ENCODE measurements at regions of chr12 and their contacts with region 1.

Region 1: GRCh38 chr12:48795480-48796455 is 6.9 kb upstream of the ADCY6 start:
- DNase-seq: peak; percentile 71 to 85 (median 75)
- H3K4me3 ChIP-seq: no peak overlapping the region
- H3K27ac ChIP-seq: no peak overlapping the region
- H3K4me1 ChIP-seq: no peaks in the 10 kb centered on the region
- H3K27me3 ChIP-seq: no peaks in the 10 kb centered on the region
- CTCF ChIP-seq: peak; percentile 81 to 96 (median 92)
- EP300 ChIP-seq: no peak
- POLR2A ChIP-seq: no peak

Region 2: DNA sequence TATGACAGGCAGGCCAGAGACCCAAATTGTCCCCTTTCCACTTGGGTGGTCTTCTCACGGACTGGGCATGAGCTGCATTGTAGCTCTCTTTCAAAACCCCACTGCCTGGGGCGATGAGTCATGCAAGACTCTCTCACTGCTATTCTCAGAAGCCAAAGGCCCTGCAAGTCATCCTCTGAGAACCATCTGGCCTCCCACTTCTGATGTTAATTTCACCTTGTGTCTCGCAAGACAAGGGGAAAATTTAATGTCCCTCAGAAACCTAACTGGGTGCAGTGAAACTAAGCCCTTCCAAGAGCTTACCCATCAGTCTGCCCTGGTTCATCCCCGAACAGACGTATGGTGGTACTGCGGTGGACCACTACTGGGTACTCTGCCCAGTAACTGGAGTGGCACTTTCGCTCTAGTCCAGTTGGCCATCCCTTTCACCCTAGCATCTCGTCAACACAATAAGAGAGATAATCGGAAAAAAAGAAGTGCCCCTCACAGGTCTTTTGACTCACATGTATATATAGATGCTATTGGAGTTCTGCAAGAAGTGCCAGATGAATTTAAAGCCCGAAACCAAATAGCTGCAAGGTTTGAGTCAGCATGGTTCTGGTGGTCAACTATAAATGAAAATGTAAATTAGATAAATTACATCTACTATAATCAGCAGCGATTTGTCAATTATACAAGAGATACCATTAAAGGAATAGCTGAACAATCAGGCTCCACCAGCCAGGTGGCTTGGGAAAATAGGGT is 194.6 kb before region 1 on chr12:
- intact Hi-C with region 1: no loop called
- DNase-seq: no peak
- H3K4me3 ChIP-seq: no peak overlapping the region
- H3K27ac ChIP-seq: no peak overlapping the region
- H3K4me1 ChIP-seq: no peaks in the 10 kb centered on the region
- H3K27me3 ChIP-seq: no peaks in the 10 kb centered on the region
- CTCF ChIP-seq: no peak
- EP300 ChIP-seq: no peak
- POLR2A ChIP-seq: no peak

Region 3: DNA sequence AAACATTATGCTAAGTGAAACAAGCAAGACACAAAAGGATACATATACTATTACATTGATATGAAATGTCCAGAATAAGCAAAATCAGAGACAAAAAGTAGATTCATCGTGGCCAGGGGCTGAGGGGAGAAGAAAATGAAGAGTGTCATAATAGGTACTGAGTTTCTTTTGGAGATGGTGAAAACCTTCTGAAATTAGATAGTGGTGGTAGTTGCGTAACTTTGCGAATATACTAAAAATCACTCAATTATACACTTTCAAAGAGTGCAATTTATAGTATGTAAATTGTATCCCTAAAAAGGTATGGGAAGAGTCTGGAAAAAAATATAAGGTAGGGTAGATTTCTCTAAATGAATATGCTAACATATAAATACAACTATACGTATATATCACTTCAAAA is 135.9 kb before region 1 on chr12:
- intact Hi-C with region 1: no loop called
- DNase-seq: no peak
- H3K4me3 ChIP-seq: no peak overlapping the region
- H3K27ac ChIP-seq: no peak overlapping the region
- H3K4me1 ChIP-seq: no peaks in the 10 kb centered on the region
- H3K27me3 ChIP-seq: no peaks in the 10 kb centered on the region
- CTCF ChIP-seq: no peak
- EP300 ChIP-seq: no peak
- POLR2A ChIP-seq: no peak

Region 4: DNA sequence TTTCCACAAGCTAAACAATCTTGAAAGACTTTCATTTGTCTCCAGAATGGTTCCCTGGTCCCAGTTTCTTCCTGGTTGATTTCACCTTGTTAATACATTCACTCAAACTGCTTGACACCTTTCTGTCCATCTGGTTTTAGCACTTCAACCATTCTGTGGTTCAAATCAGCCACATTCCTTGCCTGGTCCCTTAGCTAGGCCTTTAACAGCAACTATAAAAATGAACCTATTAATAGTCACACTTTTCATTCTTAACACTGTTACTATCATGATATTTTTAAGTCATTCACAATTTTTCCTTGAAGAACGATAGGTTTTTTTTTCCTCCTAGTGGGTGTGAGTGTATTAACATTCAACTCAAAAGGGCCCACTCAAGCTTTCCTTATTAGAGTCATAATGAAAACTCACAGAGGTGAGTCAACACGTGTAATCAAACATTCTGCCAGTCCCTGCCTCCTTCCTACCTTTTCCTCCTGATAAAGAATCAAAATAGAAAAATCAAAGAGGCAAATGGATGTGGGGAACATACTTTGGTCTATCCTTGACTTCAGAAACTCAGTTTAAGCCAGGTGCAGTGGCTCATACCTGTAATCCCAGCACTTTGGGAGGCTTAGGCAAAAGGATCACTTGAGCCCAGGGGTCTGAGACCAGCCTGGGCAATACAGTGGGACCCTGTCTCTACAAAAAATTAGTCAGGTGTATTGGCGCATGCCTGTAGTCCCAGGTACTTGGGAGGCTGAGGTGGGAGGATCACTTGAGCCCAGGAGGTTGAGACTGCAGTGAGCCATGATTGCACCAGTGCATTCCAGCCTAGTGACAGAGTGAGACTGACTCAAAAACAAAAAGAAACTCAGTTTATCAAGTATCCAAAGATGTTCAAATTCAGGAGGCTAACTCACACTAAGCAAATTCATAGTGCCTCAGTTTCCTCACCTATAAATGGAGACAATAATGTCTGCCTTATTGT is 44.7 kb before region 1 on chr12:
- intact Hi-C with region 1: loop called (anchors 1 to 5 kb)
- DNase-seq: no peak
- H3K4me3 ChIP-seq: no peak overlapping the region
- H3K27ac ChIP-seq: no peak overlapping the region
- H3K4me1 ChIP-seq: no peaks in the 10 kb centered on the region
- H3K27me3 ChIP-seq: no peaks in the 10 kb centered on the region
- CTCF ChIP-seq: no peak
- EP300 ChIP-seq: no peak
- POLR2A ChIP-seq: no peak

Region 5: DNA sequence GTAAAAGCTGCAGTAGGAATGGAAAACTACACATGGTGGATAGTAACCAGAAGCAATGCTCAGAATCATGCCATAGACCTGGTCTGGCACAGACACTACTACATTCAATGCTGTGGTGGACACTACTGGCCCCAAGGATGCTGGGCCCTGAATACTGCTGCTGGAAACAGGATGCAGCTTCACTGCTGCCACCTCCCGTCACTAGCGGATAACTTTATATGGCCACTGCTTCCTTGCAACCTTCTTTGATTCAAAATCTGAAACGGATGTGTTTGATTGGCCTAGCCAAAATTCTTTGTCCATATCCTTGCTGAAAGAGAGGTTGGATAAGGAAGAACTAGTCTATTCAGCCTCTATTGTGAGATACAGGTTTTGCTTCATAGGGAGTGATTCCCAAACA is 37.5 kb before region 1 on chr12:
- intact Hi-C with region 1: loop called in 3 of 4 experiments (anchors 1 to 5 kb)
- DNase-seq: no peak
- H3K4me3 ChIP-seq: no peak overlapping the region
- H3K27ac ChIP-seq: no peak overlapping the region
- H3K4me1 ChIP-seq: no peaks in the 10 kb centered on the region
- H3K27me3 ChIP-seq: no peaks in the 10 kb centered on the region
- CTCF ChIP-seq: no peak
- EP300 ChIP-seq: no peak
- POLR2A ChIP-seq: no peak